Activated CD8-positive, alpha-beta memory T cell treated with anti-CD3 and anti-CD28 coated beads, Interleukin-2, amount 10 ng/mL, durations not matched to agents 7 days and 5 days (primary cell): ENCODE measurements at regions of chr14 and their contacts with region 1.

Region 1: DNA sequence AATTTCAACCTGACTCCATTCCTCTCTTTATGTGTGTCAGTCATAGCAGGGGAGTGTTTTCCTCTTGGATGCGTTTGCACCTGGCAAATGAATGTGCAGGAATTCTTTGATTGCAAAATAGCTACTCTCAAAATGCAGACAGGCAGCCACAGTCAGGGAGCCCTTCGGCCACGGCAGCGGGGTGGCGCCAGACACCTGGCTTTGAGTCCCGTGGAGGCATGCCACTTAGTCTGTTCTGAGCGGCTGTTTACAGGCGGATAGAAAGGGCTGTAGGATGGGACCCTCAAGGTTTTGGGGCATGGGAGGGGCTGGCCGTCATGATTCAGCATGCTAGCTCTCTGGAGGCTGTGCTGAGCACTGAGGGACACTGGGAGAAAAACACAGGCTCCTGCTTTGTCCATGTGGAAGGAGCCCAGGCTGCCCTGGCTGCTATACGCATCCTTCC is 117.1 kb downstream of the SLC25A47 start:
- DNase-seq: peak; percentile 66
- ATAC-seq: peak; percentile 68
- H3K4me3 Mint-ChIP-seq: no peak overlapping the region
- H3K27ac Mint-ChIP-seq: no peak overlapping the region
- H3K4me1 Mint-ChIP-seq: peaks cover 28% of the 10 kb centered on the region
- H3K27me3 Mint-ChIP-seq: no peaks in the 10 kb centered on the region

Region 2: GRCh38 chr14:100547633-100548294 is 107.6 kb after region 1 on chr14:
- CTCF ChIA-PET with region 1: interaction called, 10 read pairs
- DNase-seq: peak; percentile 64
- ATAC-seq: peak; percentile 22
- H3K4me3 Mint-ChIP-seq: peak overlapping the region; percentile 20
- H3K27ac Mint-ChIP-seq: peak overlapping the region; percentile 84
- H3K4me1 Mint-ChIP-seq: peaks cover 35% of the 10 kb centered on the region
- H3K27me3 Mint-ChIP-seq: no peaks in the 10 kb centered on the region